Activated naive CD8-positive, alpha-beta T cell treated with anti-CD3 and anti-CD28 coated beads, Interleukin-2, amount 10 ng/mL, durations not matched to agents 7 days and 5 days (primary cell): ENCODE measurements at regions of chr11 and their contacts with region 1.

Region 1: GRCh38 chr11:95231127-95231880 is at the start of gene SESN3:
- DNase-seq: peak; percentile 97
- ATAC-seq: peak; percentile 96
- H3K4me3 Mint-ChIP-seq: no peak within 1 kb of the TSS
- H3K27ac Mint-ChIP-seq: peak within 1 kb of the TSS; percentile 84
- H3K4me1 Mint-ChIP-seq: peaks cover 26% of the 10 kb centered on the region
- H3K27me3 Mint-ChIP-seq: peaks cover 3% of the 10 kb centered on the region
- total RNA-seq, gene SESN3: 45.4 to 48.8 TPM

Region 2: GRCh38 chr11:95089620-95090542 is 141.4 kb before region 1 on chr11 and contains the start of gene ENDOD1:
- POLR2A ChIA-PET with region 1: interaction called, 12 read pairs
- DNase-seq: peak; percentile 92
- ATAC-seq: peak; percentile 95
- H3K4me3 Mint-ChIP-seq: peak within 1 kb of the TSS; percentile 93
- H3K27ac Mint-ChIP-seq: peak within 1 kb of the TSS; percentile 98
- H3K4me1 Mint-ChIP-seq: peaks cover 54% of the 10 kb centered on the region
- H3K27me3 Mint-ChIP-seq: no peaks in the 10 kb centered on the region
- total RNA-seq, gene ENDOD1: 23.8 TPM

Region 3: GRCh38 chr11:95156916-95157541 is 74.3 kb before region 1 on chr11:
- POLR2A ChIA-PET with region 1: interaction called, 17 read pairs
- DNase-seq: no peak
- ATAC-seq: no peak
- H3K4me3 Mint-ChIP-seq: no peak overlapping the region
- H3K27ac Mint-ChIP-seq: no peak overlapping the region
- H3K4me1 Mint-ChIP-seq: peaks cover 32% of the 10 kb centered on the region
- H3K27me3 Mint-ChIP-seq: no peaks in the 10 kb centered on the region

Region 4: DNA sequence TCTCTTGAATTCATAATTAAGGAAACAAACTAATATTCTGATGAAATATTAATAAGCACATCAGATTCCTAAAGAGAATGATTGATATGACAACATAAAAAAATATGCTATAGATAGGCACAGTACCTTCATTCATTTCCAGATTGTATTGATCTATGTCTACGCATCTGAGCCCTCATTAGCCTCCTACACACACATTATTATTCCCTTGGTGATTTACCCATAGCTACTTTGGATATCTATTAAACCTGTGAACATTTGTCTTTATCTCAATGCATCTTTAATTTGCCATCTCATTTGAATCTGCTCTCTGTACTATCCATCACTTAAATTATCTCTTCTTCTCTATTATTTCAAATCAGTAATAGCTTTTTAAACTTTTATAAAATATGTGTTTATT is 18.7 kb before region 1 on chr11:
- POLR2A ChIA-PET with region 1: no interaction called
- DNase-seq: no peak
- ATAC-seq: no peak
- H3K4me3 Mint-ChIP-seq: no peak overlapping the region
- H3K27ac Mint-ChIP-seq: no peak overlapping the region
- H3K4me1 Mint-ChIP-seq: no peaks in the 10 kb centered on the region
- H3K27me3 Mint-ChIP-seq: no peaks in the 10 kb centered on the region

Region 5: GRCh38 chr11:95337175-95337957 is 106.1 kb after region 1 on chr11:
- POLR2A ChIA-PET with region 1: interaction called, 12 read pairs
- DNase-seq: peak; percentile 65
- ATAC-seq: peak; percentile 84
- H3K4me3 Mint-ChIP-seq: no peak overlapping the region
- H3K27ac Mint-ChIP-seq: no peak overlapping the region
- H3K4me1 Mint-ChIP-seq: peaks cover 10% of the 10 kb centered on the region
- H3K27me3 Mint-ChIP-seq: no peaks in the 10 kb centered on the region

Region 6: DNA sequence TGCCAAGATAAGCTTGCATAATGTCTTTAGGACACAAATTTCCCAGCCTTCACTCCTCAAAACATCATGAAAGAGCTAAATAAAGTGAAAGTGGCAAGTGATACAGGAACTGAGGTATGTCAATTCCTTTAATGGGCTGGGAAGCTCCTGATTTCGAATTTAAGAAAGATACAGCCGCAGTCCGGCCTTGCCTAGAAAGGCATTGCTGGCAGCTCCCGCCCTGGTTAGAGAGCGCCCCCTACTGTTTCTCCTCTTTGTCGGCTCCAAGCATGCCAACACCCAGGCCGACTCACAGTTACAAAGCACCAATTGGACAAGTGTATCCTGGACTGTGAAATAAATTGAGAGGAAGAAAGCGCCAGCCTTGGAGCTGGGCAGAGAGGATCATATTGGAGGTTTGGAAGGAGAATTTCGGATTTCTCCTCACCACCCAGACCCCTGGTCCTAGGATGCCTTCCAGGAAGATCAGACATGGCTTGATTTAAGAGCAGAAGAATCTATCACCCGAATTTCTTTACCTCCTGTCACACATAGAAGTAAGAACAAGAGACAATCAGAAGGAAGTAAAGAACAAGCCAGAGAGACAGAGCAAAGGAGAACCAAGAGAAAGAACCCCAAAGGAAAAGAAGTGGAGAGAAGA is 474.3 kb after region 1 on chr11:
- POLR2A ChIA-PET with region 1: interaction called, 27 read pairs
- DNase-seq: peak; percentile 76
- ATAC-seq: peak; percentile 90
- H3K4me3 Mint-ChIP-seq: no peak overlapping the region
- H3K27ac Mint-ChIP-seq: no peak overlapping the region
- H3K4me1 Mint-ChIP-seq: peaks cover 12% of the 10 kb centered on the region
- H3K27me3 Mint-ChIP-seq: no peaks in the 10 kb centered on the region